HCT116 (cell line): ENCODE measurements at regions of chr17 and their contacts with region 1.

Region 1: DNA sequence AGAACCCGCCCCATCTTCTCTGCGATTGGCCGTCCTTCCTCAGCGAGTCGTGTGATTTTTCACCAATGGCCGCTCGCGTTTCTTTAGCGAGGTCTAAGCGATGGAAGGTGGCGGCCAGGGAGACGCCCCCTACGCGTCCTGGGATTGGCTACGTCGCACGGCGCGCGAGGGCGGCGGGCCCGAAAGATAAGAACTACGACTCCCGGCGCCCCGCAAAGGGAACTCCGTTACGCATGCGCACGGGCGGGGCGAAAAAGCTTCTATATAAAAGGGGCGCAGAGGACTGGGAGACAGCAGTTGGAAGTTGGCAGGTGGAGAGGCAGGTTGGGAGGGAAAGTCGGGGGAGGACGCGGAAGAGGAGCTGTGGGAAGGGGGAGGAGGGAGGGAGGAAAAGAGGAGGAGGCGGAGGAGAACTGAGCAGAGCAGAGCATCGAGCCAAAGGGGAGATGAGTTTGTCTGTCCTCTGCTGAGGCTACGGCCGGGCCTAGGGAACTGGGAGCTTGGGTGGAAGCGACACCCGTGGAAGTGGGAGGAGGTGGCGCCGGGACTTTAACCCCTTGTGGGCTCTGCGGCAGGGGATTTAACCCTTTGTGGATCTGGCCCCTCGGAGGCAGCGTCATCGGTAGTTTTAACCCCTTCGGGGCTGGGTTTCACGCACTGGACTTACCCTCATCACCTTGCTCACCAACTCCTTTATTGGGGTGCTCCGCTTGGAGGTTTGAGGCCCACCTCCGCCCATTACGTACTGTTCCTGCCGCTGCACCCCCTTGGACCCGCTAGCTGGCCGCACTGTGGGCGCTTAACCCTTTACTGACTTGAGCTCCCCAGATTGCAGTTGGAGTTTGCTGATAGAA is at the start of gene HEXIM1:
- DNase-seq: peak; percentile 99
- ATAC-seq: peak; percentile 82
- H3K4me3 ChIP-seq: peak within 1 kb of the TSS; percentile 95 to 96
- H3K27ac ChIP-seq: peak within 1 kb of the TSS; percentile 94
- H3K4me1 ChIP-seq: peaks cover 21 to 37% of the 10 kb centered on the region in 2 experiments
- H3K27me3 ChIP-seq: no peaks in the 10 kb centered on the region
- CTCF ChIP-seq: no peak
- POLR2A ChIP-seq: peak; percentile 100
- RAD21 ChIP-seq: no peak
- total RNA-seq, gene HEXIM1: 58.0 TPM

Region 2: DNA sequence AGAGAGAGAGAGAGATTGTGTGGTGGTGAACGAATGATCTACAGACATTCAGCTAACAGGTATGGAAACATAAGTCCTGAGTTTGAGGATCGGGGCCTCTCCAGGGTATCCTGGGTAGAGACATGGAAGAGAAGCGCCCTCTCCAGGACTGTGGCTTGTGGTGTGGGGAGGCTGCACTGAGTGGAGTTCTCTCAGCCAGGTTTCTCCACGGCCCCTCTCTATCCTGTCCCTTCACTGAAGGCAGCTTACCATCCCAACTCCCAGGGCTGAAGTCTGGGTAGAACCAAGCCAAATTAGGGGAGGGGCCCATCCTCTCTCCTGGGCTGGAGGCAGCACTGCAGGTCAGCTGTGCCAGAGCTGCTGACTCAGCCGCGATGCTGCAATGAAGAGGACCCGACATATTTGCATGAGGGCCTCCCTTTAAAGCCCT is 186.5 kb before region 1 on chr17:
- CTCF ChIA-PET with region 1: no interaction called
- POLR2A ChIA-PET with region 1: no interaction called
- RAD21 ChIA-PET with region 1: no interaction called
- intact Hi-C with region 1: no loop called
- DNase-seq: no peak
- ATAC-seq: peak; percentile 89
- H3K4me3 ChIP-seq: no peak overlapping the region
- H3K27ac ChIP-seq: no peak overlapping the region
- H3K4me1 ChIP-seq: peaks cover 6 to 11% of the 10 kb centered on the region in 2 experiments
- H3K27me3 ChIP-seq: no peaks in the 10 kb centered on the region
- CTCF ChIP-seq: peak in 2 of 3 experiments; percentile 26 to 29; a peak in 3 of 6 replicates
- POLR2A ChIP-seq: no peak
- RAD21 ChIP-seq: no peak; the same call in 1 of the 2 replicates

Region 3: GRCh38 chr17:45098869-45099616 is 49.4 kb before region 1 on chr17:
- CTCF ChIA-PET with region 1: no interaction called
- POLR2A ChIA-PET with region 1: no interaction called
- RAD21 ChIA-PET with region 1: no interaction called
- intact Hi-C with region 1: no loop called
- DNase-seq: peak; percentile 51
- ATAC-seq: peak; percentile 96
- H3K4me3 ChIP-seq: no peak overlapping the region
- H3K27ac ChIP-seq: peak overlapping the region; percentile 19; the same call in 1 of the 2 replicates
- H3K4me1 ChIP-seq: peaks cover 0 to 3% of the 10 kb centered on the region in 2 experiments; a peak in 1 of 4 replicates
- H3K27me3 ChIP-seq: no peaks in the 10 kb centered on the region
- CTCF ChIP-seq: peak; percentile 73 to 94 (median 92)
- POLR2A ChIP-seq: no peak
- RAD21 ChIP-seq: peak; percentile 72

Region 4: GRCh38 chr17:45123930-45124796 is 24.2 kb before region 1 on chr17:
- CTCF ChIA-PET with region 1: interaction called, 3 read pairs
- POLR2A ChIA-PET with region 1: interaction called, 15 read pairs
- RAD21 ChIA-PET with region 1: no interaction called
- intact Hi-C with region 1: no loop called
- DNase-seq: peak; percentile 69
- ATAC-seq: peak; percentile 76
- H3K4me3 ChIP-seq: peak overlapping the region; percentile 32 to 57
- H3K27ac ChIP-seq: peak overlapping the region; percentile 97
- H3K4me1 ChIP-seq: peaks cover 68 to 74% of the 10 kb centered on the region in 2 experiments
- H3K27me3 ChIP-seq: no peaks in the 10 kb centered on the region
- CTCF ChIP-seq: no peak
- POLR2A ChIP-seq: no peak
- RAD21 ChIP-seq: no peak

Region 5: GRCh38 chr17:45161019-45161825 is 12.8 kb after region 1 on chr17:
- CTCF ChIA-PET with region 1: interaction called, 25 read pairs
- POLR2A ChIA-PET with region 1: interaction called, 258 read pairs
- RAD21 ChIA-PET with region 1: interaction called, 5 to 6 read pairs
- intact Hi-C with region 1: no loop called
- DNase-seq: peak; percentile 100
- ATAC-seq: peak; percentile 93
- H3K4me3 ChIP-seq: peak overlapping the region; percentile 89 to 97
- H3K27ac ChIP-seq: peak overlapping the region; percentile 89
- H3K4me1 ChIP-seq: peaks cover 23 to 35% of the 10 kb centered on the region in 2 experiments
- H3K27me3 ChIP-seq: no peaks in the 10 kb centered on the region
- CTCF ChIP-seq: 0 out of 6 replicates have a peak, but pooled peaks of 1 of the 3 experiments have one; percentile 9
- POLR2A ChIP-seq: peak; percentile 52
- RAD21 ChIP-seq: 0 out of 2 replicates have a peak, but pooled peaks have one; percentile 15

Region 6: GRCh38 chr17:45172454-45173286 is 24.3 kb after region 1 on chr17:
- CTCF ChIA-PET with region 1: interaction called, 29 read pairs
- POLR2A ChIA-PET with region 1: interaction called, 176 read pairs
- RAD21 ChIA-PET with region 1: interaction called in 1 of 2 experiments, 3 read pairs
- intact Hi-C with region 1: loop called (anchors 2 kb)
- DNase-seq: peak; percentile 87
- ATAC-seq: peak; percentile 78
- H3K4me3 ChIP-seq: peak overlapping the region; percentile 28 to 60
- H3K27ac ChIP-seq: peak overlapping the region; percentile 99
- H3K4me1 ChIP-seq: peaks cover 68 to 70% of the 10 kb centered on the region in 2 experiments
- H3K27me3 ChIP-seq: no peaks in the 10 kb centered on the region
- CTCF ChIP-seq: peak in 2 of 3 experiments; percentile 13 to 18; a peak in 1 of 6 replicates
- POLR2A ChIP-seq: peak; percentile 54
- RAD21 ChIP-seq: no peak

Region 7: GRCh38 chr17:45197555-45198334 is 49.3 kb after region 1 on chr17:
- CTCF ChIA-PET with region 1: interaction called, 129 read pairs
- POLR2A ChIA-PET with region 1: interaction called, 141 read pairs
- RAD21 ChIA-PET with region 1: interaction called, 18 to 20 read pairs
- intact Hi-C with region 1: loop called (anchors 1 kb)
- DNase-seq: peak; percentile 81
- ATAC-seq: peak; percentile 96
- H3K4me3 ChIP-seq: no peak overlapping the region
- H3K27ac ChIP-seq: peak overlapping the region; percentile 53
- H3K4me1 ChIP-seq: peaks cover 12 to 31% of the 10 kb centered on the region in 2 experiments; a peak in 3 of 4 replicates
- H3K27me3 ChIP-seq: no peaks in the 10 kb centered on the region
- CTCF ChIP-seq: peak; percentile 98 to 99 (median 99)
- POLR2A ChIP-seq: no peak
- RAD21 ChIP-seq: peak; percentile 100

Region 8: GRCh38 chr17:45428050-45428617 is 279.7 kb after region 1 on chr17:
- CTCF ChIA-PET with region 1: no interaction called
- POLR2A ChIA-PET with region 1: interaction called, 4 read pairs
- RAD21 ChIA-PET with region 1: no interaction called
- intact Hi-C with region 1: loop called (anchors 5 kb)
- DNase-seq: peak; percentile 57
- ATAC-seq: peak; percentile 35
- H3K4me3 ChIP-seq: peak overlapping the region; percentile 3 to 8; a peak in 1 of 4 replicates
- H3K27ac ChIP-seq: no peak overlapping the region
- H3K4me1 ChIP-seq: peaks cover 16 to 56% of the 10 kb centered on the region in 2 experiments
- H3K27me3 ChIP-seq: no peaks in the 10 kb centered on the region
- CTCF ChIP-seq: peak; percentile 93 to 99 (median 99)
- POLR2A ChIP-seq: no peak
- RAD21 ChIP-seq: peak; percentile 98